Kidney (tissue), 22 donors: ENCODE measurements at regions of chr22 and their contacts with region 1.

Region 1: DNA sequence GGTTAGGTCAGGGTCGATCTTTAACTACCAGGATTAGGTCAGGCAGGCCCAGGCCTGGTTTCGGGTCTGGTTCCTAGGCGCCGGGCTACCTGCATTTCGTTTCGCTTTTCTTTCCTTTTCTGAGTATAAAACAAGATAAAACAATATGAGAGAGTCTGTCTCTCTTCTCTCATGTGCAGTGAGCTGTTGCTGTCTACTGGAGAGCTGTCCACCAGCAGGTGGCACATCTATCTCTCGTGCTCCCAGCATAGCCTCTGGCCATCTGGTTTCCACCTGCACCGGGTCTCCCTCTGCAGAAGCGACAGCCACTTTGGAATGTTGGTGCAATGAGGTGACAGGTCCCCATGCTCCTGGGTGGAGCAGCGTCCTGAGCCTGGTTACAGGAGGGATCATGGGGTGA is 27.6 kb downstream of the RIBC2 start:
- DNase-seq: peak in 4 of 5 donors; percentile 74 to 86 (median 80)
- H3K4me3 ChIP-seq: no peak overlapping the region
- H3K27ac ChIP-seq: no peak overlapping the region
- H3K4me1 ChIP-seq: no peaks in the 10 kb centered on the region
- H3K27me3 ChIP-seq: no peaks in the 10 kb centered on the region
- CTCF ChIP-seq: peak; percentile 28

Region 2: DNA sequence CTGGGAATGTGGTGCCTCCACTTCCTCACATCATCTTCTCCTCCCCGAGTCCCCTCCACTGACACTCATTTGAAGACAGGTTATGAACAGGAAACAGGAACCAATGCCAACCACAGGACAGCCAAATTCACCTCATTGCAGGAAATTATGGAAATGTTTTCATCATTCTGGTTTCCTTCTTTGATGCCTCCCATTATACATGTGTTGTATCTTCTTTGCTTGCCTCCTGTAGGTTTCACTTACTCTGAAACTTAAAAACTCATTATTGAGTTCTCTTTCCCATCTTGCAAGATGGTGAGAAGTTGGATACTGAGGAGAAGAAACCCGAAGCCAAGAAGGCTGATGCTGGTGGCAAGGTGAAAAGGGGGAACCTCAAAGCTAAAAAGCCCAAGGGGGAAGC is 539.8 kb before region 1 on chr22:
- intact Hi-C with region 1: no loop called
- DNase-seq: peak in 1 of 5 donors; percentile 8
- H3K4me3 ChIP-seq: no peak overlapping the region
- H3K27ac ChIP-seq: no peak overlapping the region
- H3K4me1 ChIP-seq: no peaks in the 10 kb centered on the region
- H3K27me3 ChIP-seq: no peaks in the 10 kb centered on the region
- CTCF ChIP-seq: no peak

Region 3: DNA sequence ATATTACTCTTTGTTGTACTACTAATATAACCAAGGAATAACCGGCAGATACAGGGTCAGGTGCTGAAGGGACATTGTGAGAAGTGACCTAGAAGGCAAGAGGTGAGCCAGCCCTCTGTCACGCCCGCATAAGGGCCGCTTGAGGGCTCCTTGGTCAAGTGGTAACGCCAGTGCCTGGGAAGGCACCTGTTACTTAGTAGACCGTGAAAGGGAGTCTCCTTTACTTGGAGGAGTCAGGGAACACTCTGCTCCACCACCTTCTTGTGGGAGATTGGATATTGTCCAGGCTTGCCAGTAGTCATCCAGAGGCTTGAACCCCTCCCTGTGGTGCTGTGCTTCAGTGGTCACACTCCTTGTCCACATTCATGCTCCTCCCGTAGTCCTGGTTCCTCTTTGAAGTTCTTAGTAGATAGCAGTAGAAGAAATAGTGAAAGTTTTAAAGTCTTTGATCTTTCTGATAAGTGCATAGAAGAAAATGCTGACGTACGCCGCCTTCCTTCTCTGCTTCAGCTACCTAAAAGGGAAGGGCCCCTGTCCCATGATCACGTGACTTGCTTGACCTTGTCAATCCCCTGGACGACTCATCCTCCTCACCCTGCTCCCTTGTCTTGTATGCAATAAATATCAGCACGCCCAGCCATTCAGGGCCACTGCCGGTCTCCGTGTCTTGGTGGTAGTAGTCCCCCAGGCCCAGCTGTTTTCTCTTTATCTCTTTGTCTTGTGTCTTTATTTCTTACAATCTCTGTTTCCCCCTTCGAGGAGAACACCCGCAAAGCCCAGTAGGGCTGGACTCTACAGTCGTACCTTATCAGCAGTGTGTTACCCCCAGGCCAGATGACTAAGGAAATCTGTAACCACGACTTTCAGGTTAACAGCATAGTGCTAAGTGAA is 271.3 kb before region 1 on chr22:
- intact Hi-C with region 1: no loop called
- DNase-seq: peak in 1 of 5 donors; percentile 82
- H3K4me3 ChIP-seq: no peak overlapping the region
- H3K27ac ChIP-seq: no peak overlapping the region
- H3K4me1 ChIP-seq: peaks cover 2 to 9% (median 4%) of the 10 kb centered on the region in 3 donors
- H3K27me3 ChIP-seq: no peaks in the 10 kb centered on the region
- CTCF ChIP-seq: no peak

Region 4: DNA sequence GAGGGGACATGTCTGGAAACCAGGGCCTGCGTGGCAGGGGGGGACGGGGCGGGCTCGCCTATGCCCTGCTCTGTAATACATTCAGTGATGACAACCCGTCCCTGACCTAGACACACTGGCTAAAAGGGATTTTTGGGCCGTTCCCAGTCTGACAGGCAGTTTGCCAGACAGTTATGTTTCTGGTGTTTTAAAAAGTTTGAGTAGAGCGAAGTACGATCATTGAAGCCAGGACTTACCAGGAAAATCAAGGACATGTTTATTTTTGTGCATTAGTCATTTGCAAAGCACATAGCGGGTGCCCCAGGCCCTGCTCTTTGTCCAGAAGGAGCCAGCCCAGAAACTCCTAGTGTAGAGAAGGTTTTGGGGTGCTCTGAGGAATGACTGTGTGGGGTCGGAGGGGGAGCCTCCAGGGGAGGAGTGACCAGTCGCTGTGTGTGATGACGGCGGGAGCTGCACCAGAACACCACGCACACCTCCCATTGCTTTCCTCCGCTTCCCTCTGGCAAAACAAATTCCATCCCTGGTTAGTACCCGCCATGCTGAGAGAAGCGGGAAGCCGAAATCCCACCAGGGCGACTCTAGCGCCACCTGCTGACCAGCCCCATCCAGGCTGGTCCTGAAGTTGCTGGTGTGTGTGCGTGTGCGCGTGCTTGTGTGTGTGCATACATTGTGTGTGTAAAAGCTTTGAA is 112.4 kb after region 1 on chr22:
- intact Hi-C with region 1: loop called (anchors 10 kb)
- DNase-seq: peak; percentile 88 to 93 (median 89)
- H3K4me3 ChIP-seq: no peak overlapping the region
- H3K27ac ChIP-seq: peak overlapping the region; percentile 41 to 48
- H3K4me1 ChIP-seq: peaks cover 0 to 9% (median 3%) of the 10 kb centered on the region in 3 donors
- H3K27me3 ChIP-seq: no peaks in the 10 kb centered on the region
- CTCF ChIP-seq: peak; percentile 79